ENCODE measurements at regions of chr18 and their contacts with region 1.

Region 1: GRCh38 chr18:70089858-70090257 is 115.6 kb downstream of the RTTN start:
- DNase-seq: no peak
- ATAC-seq: no peak
- H3K4me3 ChIP-seq: no peak overlapping the region
- H3K27ac ChIP-seq: no peak overlapping the region
- H3K4me1 ChIP-seq: no peaks in the 10 kb centered on the region
- H3K27me3 ChIP-seq: no peaks in the 10 kb centered on the region
- CTCF ChIP-seq: no peak
- EP300 ChIP-seq: no peak
- POLR2A ChIP-seq: no peak
- RAD21 ChIP-seq: no peak

Region 2: GRCh38 chr18:68847219-68847837 is 1242.5 kb before region 1 on chr18:
- CTCF ChIA-PET with region 1: interaction called, 7 read pairs
- POLR2A ChIA-PET with region 1: no interaction called
- RAD21 ChIA-PET with region 1: no interaction called
- SMC1A ChIA-PET with region 1: interaction called, 8 read pairs
- in situ Hi-C with region 1: loop called (anchors 10 kb)
- intact Hi-C with region 1: no loop called
- DNase-seq: no peak
- ATAC-seq: peak; percentile 33; the same call in 1 of the 3 replicates
- H3K4me3 ChIP-seq: no peak overlapping the region
- H3K27ac ChIP-seq: no peak overlapping the region
- H3K4me1 ChIP-seq: no peaks in the 10 kb centered on the region
- H3K27me3 ChIP-seq: no peaks in the 10 kb centered on the region
- CTCF ChIP-seq: peak; percentile 46 to 64 (median 50); a peak in 4 of 6 replicates
- EP300 ChIP-seq: no peak
- POLR2A ChIP-seq: no peak
- RAD21 ChIP-seq: peak; percentile 67

Region 3: GRCh38 chr18:68925268-68925667 is 1164.6 kb before region 1 on chr18:
- CTCF ChIA-PET with region 1: interaction called, 13 read pairs
- POLR2A ChIA-PET with region 1: no interaction called
- RAD21 ChIA-PET with region 1: interaction called, 5 read pairs
- SMC1A ChIA-PET with region 1: interaction called, 13 read pairs
- in situ Hi-C with region 1: loop called (anchors 10 kb)
- intact Hi-C with region 1: loop called (anchors 10 kb)
- DNase-seq: no peak
- ATAC-seq: peak; percentile 94
- H3K4me3 ChIP-seq: no peak overlapping the region
- H3K27ac ChIP-seq: no peak overlapping the region
- H3K4me1 ChIP-seq: no peaks in the 10 kb centered on the region
- H3K27me3 ChIP-seq: no peaks in the 10 kb centered on the region; a peak in 1 of 4 replicates
- CTCF ChIP-seq: peak; percentile 27 to 61 (median 46); a peak in 4 of 6 replicates
- EP300 ChIP-seq: no peak
- POLR2A ChIP-seq: no peak
- RAD21 ChIP-seq: peak; percentile 68

Region 4: DNA sequence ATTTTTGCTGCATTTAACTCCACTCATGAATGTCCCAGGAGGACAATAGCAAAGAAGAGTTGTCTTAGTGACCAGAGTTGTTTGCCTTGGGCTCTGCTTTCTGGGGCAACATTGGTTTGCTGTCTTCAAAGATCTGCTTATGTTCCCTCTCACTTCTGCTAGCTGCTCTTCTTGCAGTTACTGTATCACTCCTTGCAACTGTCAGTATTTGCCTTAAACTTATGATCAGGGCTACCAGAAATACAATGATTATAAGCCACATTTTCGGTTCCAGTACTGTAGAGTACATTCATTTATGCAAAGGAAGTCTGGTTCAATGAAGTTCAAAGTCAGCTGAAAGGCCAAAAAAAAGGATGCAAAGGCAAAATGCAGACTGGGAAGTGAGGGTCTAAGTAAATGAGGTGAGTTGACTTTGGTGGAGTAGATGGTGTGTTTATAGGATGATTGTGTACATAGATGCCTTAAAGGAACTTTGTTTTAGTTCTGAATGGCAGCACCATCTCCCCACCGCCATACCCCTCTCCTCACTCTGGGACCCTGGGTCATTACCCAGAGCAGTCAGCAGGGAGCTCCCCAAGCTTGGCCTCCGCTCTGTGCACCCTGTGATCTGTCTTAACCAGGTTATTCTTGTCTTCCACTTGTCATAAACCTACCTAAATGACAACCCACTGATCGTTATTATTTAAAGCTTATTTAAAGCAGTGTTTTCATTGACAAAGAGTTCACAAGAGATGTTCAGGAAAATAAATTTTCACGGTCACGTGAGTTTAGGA is 453.1 kb before region 1 on chr18:
- CTCF ChIA-PET with region 1: interaction called, 25 read pairs
- POLR2A ChIA-PET with region 1: no interaction called
- RAD21 ChIA-PET with region 1: interaction called, 7 read pairs
- SMC1A ChIA-PET with region 1: interaction called, 11 read pairs
- in situ Hi-C with region 1: loop called (anchors 10 kb)
- intact Hi-C with region 1: loop called (anchors 2 kb)
- DNase-seq: no peak
- ATAC-seq: peak; percentile 95
- H3K4me3 ChIP-seq: no peak overlapping the region
- H3K27ac ChIP-seq: no peak overlapping the region
- H3K4me1 ChIP-seq: no peaks in the 10 kb centered on the region
- H3K27me3 ChIP-seq: no peaks in the 10 kb centered on the region
- CTCF ChIP-seq: peak; percentile 41 to 48 (median 45)
- EP300 ChIP-seq: no peak
- POLR2A ChIP-seq: no peak
- RAD21 ChIP-seq: peak; percentile 80